CD4-positive, alpha-beta T cell (primary cell): ENCODE measurements at regions of chr20 and their contacts with region 1.

Region 1: GRCh38 chr20:59120491-59120890 is 43.1 kb upstream of the ZNF831 start:
- DNase-seq: peak in 6 of 14 experiments; percentile 23 to 79 (median 50)
- ATAC-seq: no peak
- H3K4me3 ChIP-seq: no peak overlapping the region
- H3K4me3 Mint-ChIP-seq: peak overlapping the region; percentile 72
- H3K27ac ChIP-seq: peak overlapping the region; percentile 77 to 85
- H3K27ac Mint-ChIP-seq: peak overlapping the region; percentile 99
- H3K4me1 ChIP-seq: peaks cover 85% of the 10 kb centered on the region
- H3K4me1 Mint-ChIP-seq: peaks cover 89% of the 10 kb centered on the region
- H3K27me3 ChIP-seq: no peaks in the 10 kb centered on the region
- H3K27me3 Mint-ChIP-seq: no peaks in the 10 kb centered on the region
- CTCF ChIP-seq: no peak

Region 2: DNA sequence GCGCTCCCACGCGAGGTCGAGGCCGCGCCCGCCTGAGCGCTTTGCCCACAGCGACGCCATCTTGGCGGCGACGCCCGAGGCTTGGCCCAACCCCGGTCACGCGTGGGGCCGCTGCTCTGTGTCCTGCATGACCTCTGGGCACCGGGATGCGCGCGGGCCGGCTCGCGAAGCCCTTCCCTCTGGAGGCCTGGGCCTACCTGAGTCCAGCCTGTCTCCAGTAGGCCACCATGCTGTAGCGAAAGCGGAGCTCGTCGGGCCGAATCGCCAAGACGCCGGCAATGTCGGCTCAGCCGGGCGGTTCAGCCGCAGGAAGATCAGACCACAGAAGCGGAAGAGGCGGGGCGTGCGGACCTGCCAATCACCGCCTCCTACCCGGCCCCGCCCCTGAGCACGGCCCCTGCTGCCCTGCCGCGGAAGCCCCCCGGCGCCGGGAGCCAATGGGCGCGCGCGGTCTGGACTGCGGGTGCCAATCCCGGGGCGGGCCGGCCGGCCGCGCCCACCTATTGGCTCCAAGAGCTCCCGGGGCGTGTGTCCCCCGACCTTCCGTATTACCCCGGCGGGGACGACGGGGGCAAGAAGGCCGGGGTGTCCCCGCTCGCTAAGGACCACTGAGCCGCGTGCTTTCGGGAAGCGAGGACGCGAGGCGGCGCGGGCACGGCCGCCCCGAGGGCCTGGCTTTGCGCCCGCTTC is 88.3 kb before region 1 on chr20 and contains the start of gene ATP5F1E:
- CTCF ChIA-PET with region 1: no interaction called
- POLR2A ChIA-PET with region 1: interaction called, 24 read pairs
- intact Hi-C with region 1: no loop called
- DNase-seq: peak; percentile 94 to 99 (median 96)
- ATAC-seq: peak; percentile 95
- H3K4me3 ChIP-seq: peak within 1 kb of the TSS; percentile 76
- H3K4me3 Mint-ChIP-seq: peak within 1 kb of the TSS; percentile 97
- H3K27ac ChIP-seq: peak within 1 kb of the TSS; percentile 81 to 86
- H3K27ac Mint-ChIP-seq: peak within 1 kb of the TSS; percentile 87
- H3K4me1 ChIP-seq: peaks cover 31% of the 10 kb centered on the region
- H3K4me1 Mint-ChIP-seq: peaks cover 61% of the 10 kb centered on the region
- H3K27me3 ChIP-seq: no peaks in the 10 kb centered on the region
- H3K27me3 Mint-ChIP-seq: no peaks in the 10 kb centered on the region
- CTCF ChIP-seq: no peak
- total RNA-seq, gene ATP5F1E: 51.1 to 53.1 TPM

Region 3: GRCh38 chr20:59102841-59103299 is 17.6 kb before region 1 on chr20:
- CTCF ChIA-PET with region 1: no interaction called
- POLR2A ChIA-PET with region 1: interaction called, 11 read pairs
- intact Hi-C with region 1: no loop called
- DNase-seq: peak in 1 of 14 experiments; percentile 24
- ATAC-seq: peak; percentile 32
- H3K4me3 ChIP-seq: no peak overlapping the region
- H3K4me3 Mint-ChIP-seq: no peak overlapping the region
- H3K27ac ChIP-seq: no peak overlapping the region
- H3K27ac Mint-ChIP-seq: no peak overlapping the region
- H3K4me1 ChIP-seq: peaks cover 9% of the 10 kb centered on the region
- H3K4me1 Mint-ChIP-seq: peaks cover 11% of the 10 kb centered on the region
- H3K27me3 ChIP-seq: no peaks in the 10 kb centered on the region
- H3K27me3 Mint-ChIP-seq: no peaks in the 10 kb centered on the region
- CTCF ChIP-seq: no peak

Region 4: GRCh38 chr20:59159493-59160376 is 39.2 kb after region 1 on chr20:
- CTCF ChIA-PET with region 1: interaction called, 12 read pairs
- POLR2A ChIA-PET with region 1: interaction called, 203 read pairs
- intact Hi-C with region 1: loop called (anchors 1 to 2 kb)
- DNase-seq: peak; percentile 47 to 93 (median 66)
- ATAC-seq: peak; percentile 81
- H3K4me3 ChIP-seq: peak overlapping the region; percentile 70
- H3K4me3 Mint-ChIP-seq: peak overlapping the region; percentile 89
- H3K27ac ChIP-seq: peak overlapping the region; percentile 94 to 95
- H3K27ac Mint-ChIP-seq: peak overlapping the region; percentile 95
- H3K4me1 ChIP-seq: peaks cover 68% of the 10 kb centered on the region
- H3K4me1 Mint-ChIP-seq: peaks cover 98% of the 10 kb centered on the region
- H3K27me3 ChIP-seq: no peaks in the 10 kb centered on the region
- H3K27me3 Mint-ChIP-seq: no peaks in the 10 kb centered on the region
- CTCF ChIP-seq: no peak

Region 5: GRCh38 chr20:59207742-59208357 is 87.4 kb after region 1 on chr20:
- CTCF ChIA-PET with region 1: interaction called, 27 read pairs
- POLR2A ChIA-PET with region 1: interaction called, 42 read pairs
- intact Hi-C with region 1: loop called in 1 of 2 experiments (anchors 2 kb)
- DNase-seq: peak; percentile 73 to 90 (median 81)
- ATAC-seq: peak; percentile 96
- H3K4me3 ChIP-seq: no peak overlapping the region
- H3K4me3 Mint-ChIP-seq: no peak overlapping the region
- H3K27ac ChIP-seq: no peak overlapping the region
- H3K27ac Mint-ChIP-seq: peak overlapping the region; percentile 77
- H3K4me1 ChIP-seq: peaks cover 27% of the 10 kb centered on the region
- H3K4me1 Mint-ChIP-seq: peaks cover 51% of the 10 kb centered on the region
- H3K27me3 ChIP-seq: no peaks in the 10 kb centered on the region
- H3K27me3 Mint-ChIP-seq: no peaks in the 10 kb centered on the region
- CTCF ChIP-seq: peak; percentile 78

Region 6: DNA sequence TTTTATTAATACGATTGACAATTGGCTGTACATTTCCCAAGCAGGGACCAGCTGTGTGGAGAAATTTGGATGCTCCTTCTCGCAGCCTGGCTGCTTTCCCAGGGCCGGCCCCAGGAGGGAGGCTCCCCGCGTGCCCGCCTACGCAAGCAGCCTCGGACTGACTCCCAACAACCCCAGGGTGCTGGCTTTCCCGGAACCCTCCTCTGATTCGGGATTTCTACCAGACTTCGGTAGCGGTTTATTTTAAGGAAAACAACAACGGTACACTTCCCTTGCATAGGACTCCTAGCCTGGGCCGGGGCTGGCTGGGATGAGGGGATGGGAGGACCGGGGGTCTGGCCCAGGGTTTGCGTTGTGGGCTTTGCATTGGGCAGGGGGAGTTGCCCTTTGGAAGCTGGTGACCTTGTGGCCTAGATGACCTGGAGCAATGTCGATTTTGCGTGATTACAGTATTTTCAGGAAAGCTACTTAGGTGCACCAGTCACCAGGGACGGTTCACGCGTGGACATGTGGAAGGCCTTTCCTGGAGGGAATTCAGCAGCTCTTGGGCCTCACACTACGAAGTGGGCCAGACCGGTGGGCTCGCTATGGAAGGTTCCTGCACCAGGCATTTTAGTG is 463.0 kb after region 1 on chr20:
- CTCF ChIA-PET with region 1: no interaction called
- POLR2A ChIA-PET with region 1: no interaction called
- intact Hi-C with region 1: no loop called
- DNase-seq: no peak
- ATAC-seq: no peak
- H3K4me3 ChIP-seq: no peak overlapping the region
- H3K4me3 Mint-ChIP-seq: no peak overlapping the region
- H3K27ac ChIP-seq: no peak overlapping the region
- H3K27ac Mint-ChIP-seq: no peak overlapping the region
- H3K4me1 ChIP-seq: no peaks in the 10 kb centered on the region
- H3K4me1 Mint-ChIP-seq: peaks cover 6% of the 10 kb centered on the region
- H3K27me3 ChIP-seq: peaks cover 2 to 9% of the 10 kb centered on the region in 2 experiments
- H3K27me3 Mint-ChIP-seq: peaks cover 34% of the 10 kb centered on the region
- CTCF ChIP-seq: no peak

Region 7: GRCh38 chr20:59873409-59873808 is 752.9 kb after region 1 on chr20:
- CTCF ChIA-PET with region 1: no interaction called
- POLR2A ChIA-PET with region 1: no interaction called
- intact Hi-C with region 1: no loop called
- DNase-seq: no peak
- ATAC-seq: no peak
- H3K4me3 ChIP-seq: no peak overlapping the region
- H3K4me3 Mint-ChIP-seq: no peak overlapping the region
- H3K27ac ChIP-seq: no peak overlapping the region
- H3K27ac Mint-ChIP-seq: no peak overlapping the region
- H3K4me1 ChIP-seq: no peaks in the 10 kb centered on the region
- H3K4me1 Mint-ChIP-seq: no peaks in the 10 kb centered on the region
- H3K27me3 ChIP-seq: no peaks in the 10 kb centered on the region
- H3K27me3 Mint-ChIP-seq: no peaks in the 10 kb centered on the region
- CTCF ChIP-seq: no peak